Naive thymus-derived CD8-positive, alpha-beta T cell (primary cell): ENCODE measurements at regions of chr12 and their contacts with region 1.

Region 1: GRCh38 chr12:53379389-53380103 is 430 bp upstream of the SP1 start:
- DNase-seq: peak; percentile 68 to 100 (median 99)
- ATAC-seq: peak; percentile 78 to 81
- H3K4me3 Mint-ChIP-seq: no peak overlapping the region
- H3K27ac Mint-ChIP-seq: no peak overlapping the region
- H3K4me1 Mint-ChIP-seq: peaks cover 20 to 41% (median 38%) of the 10 kb centered on the region in 4 donors
- H3K27me3 Mint-ChIP-seq: no peaks in the 10 kb centered on the region

Region 2: DNA sequence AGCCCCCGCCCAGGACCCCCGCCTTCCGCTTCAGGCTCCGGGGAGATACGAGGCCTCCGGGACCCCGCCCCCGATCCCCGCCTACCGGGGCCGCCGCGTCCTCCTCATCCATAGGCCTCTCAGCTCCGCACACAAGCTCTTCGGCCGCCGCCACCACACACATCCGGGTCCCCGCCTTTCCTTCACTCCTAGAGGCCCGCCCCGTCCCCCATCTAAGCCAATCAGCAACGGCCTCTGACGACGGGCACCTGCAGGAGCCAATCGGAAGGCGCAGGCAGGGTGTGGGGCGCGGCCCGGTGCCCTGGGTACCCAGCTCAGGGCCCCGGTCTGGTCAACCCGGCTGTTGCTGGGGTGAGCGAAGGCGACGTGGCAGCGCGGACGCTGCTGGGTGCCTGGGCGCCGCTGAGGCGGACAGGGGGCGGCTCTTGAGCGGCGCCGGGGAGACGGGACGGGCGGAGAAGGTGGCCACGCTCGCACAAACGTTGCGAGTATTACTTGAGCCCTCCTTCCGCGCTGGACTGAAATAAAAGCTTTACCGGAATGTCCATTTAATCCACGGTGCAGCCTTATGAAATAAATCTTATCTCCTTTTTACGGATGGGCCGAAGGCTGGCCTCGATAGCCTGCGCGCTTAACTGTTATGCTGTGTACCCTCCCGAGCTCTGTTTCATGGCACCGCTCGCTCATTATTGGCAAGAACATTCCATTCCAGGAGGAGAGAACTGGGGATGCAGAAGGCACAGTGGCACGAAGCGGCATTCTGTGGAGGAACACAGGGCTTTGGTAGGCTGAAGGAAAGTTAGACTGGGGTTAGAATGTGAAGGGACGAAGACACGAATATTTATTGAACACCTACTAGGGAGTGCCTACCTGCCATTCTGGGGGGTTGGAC is 300.1 kb before region 1 on chr12 and contains the start of gene SPRYD3:
- POLR2A ChIA-PET with region 1: interaction called, 10 read pairs
- DNase-seq: peak; percentile 91 to 99 (median 97)
- ATAC-seq: peak; percentile 95 to 96
- H3K4me3 Mint-ChIP-seq: peak within 1 kb of the TSS; percentile 85 to 99 (median 94)
- H3K27ac Mint-ChIP-seq: peak within 1 kb of the TSS; percentile 91 to 98 (median 97)
- H3K4me1 Mint-ChIP-seq: peaks cover 20 to 59% (median 47%) of the 10 kb centered on the region in 4 donors
- H3K27me3 Mint-ChIP-seq: no peaks in the 10 kb centered on the region
- polyA plus RNA-seq, gene SPRYD3: 49.4 to 53.2 (median 51.7) TPM

Region 3: GRCh38 chr12:53295070-53295890 is 84.3 kb before region 1 on chr12 and contains the start of gene PFDN5:
- POLR2A ChIA-PET with region 1: interaction called, 12 read pairs
- DNase-seq: peak; percentile 72 to 94 (median 87)
- ATAC-seq: peak; percentile 90 to 93
- H3K4me3 Mint-ChIP-seq: peak within 1 kb of the TSS; percentile 95 to 100 (median 99)
- H3K27ac Mint-ChIP-seq: peak within 1 kb of the TSS; percentile 97 to 100 (median 99)
- H3K4me1 Mint-ChIP-seq: peaks cover 10 to 61% (median 46%) of the 10 kb centered on the region in 4 donors
- H3K27me3 Mint-ChIP-seq: no peaks in the 10 kb centered on the region
- polyA plus RNA-seq, gene PFDN5: 1,657 to 1,928 (median 1,896) TPM

Region 4: DNA sequence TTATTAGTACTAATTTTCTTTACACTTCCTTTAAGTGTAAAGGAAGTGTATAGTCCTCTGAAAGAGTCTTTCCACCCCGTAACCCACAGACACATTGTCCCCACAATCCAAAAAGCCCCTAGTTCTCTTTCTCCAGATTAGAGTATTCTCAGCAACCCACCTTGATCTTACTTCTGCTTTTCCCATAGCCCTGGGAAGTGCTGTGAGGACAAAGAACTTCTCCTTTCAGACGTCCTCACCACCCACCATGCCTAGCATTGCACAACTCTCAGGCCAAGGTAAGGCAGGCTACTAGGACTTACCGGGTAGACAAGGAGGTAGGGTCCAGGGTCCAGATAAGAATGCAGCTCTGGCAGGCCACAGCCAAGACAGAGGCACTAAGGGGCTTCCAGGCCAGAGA is 65.5 kb before region 1 on chr12:
- POLR2A ChIA-PET with region 1: no interaction called
- DNase-seq: no peak
- ATAC-seq: no peak
- H3K4me3 Mint-ChIP-seq: no peak overlapping the region
- H3K27ac Mint-ChIP-seq: peak overlapping the region in 2 of 10 donors; percentile 33 to 71
- H3K4me1 Mint-ChIP-seq: peaks cover 4 to 8% (median 6%) of the 10 kb centered on the region in 4 donors
- H3K27me3 Mint-ChIP-seq: no peaks in the 10 kb centered on the region

Region 5: DNA sequence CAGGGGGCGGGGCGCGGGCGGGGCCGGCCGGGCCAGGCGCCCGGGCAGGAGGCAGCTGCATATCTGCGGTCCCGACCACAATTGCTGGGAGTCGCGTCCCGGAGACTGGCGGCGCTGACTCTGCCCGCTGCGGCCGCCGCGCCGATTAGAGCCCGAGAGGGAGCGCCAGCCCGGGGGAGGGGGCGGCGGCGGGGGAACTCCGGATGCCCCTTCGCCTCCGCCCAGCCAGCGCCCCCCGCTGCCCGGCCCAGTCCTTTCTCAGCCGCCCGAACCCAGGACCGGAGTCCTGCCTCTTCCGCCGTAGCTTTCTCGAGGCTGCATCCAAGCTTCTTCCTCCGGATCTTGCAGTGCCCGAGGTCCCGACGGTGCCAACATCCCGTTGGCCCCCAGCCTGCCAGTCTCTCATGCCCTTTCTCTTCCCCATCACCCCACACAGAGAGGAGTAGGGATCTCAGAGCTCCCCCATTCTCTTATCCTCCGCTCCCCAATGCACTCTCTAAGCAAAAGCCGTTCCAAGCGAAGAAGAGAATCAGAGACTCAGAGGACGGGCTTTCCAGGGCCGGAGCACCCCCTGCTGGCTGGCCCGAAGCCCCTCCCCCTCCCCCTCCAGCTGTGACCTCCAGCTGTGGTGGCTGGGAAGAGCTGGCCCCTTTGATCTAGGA is 34.6 kb before region 1 on chr12:
- POLR2A ChIA-PET with region 1: interaction called, 18 read pairs
- DNase-seq: peak; percentile 46 to 85 (median 64)
- ATAC-seq: peak; percentile 67 to 85
- H3K4me3 Mint-ChIP-seq: peak overlapping the region; percentile 92 to 100 (median 98)
- H3K27ac Mint-ChIP-seq: peak overlapping the region; percentile 84 to 97 (median 92)
- H3K4me1 Mint-ChIP-seq: peaks cover 17 to 25% (median 18%) of the 10 kb centered on the region in 4 donors
- H3K27me3 Mint-ChIP-seq: peaks cover 0 to 10% (median 1%) of the 10 kb centered on the region in 5 donors

Region 6: DNA sequence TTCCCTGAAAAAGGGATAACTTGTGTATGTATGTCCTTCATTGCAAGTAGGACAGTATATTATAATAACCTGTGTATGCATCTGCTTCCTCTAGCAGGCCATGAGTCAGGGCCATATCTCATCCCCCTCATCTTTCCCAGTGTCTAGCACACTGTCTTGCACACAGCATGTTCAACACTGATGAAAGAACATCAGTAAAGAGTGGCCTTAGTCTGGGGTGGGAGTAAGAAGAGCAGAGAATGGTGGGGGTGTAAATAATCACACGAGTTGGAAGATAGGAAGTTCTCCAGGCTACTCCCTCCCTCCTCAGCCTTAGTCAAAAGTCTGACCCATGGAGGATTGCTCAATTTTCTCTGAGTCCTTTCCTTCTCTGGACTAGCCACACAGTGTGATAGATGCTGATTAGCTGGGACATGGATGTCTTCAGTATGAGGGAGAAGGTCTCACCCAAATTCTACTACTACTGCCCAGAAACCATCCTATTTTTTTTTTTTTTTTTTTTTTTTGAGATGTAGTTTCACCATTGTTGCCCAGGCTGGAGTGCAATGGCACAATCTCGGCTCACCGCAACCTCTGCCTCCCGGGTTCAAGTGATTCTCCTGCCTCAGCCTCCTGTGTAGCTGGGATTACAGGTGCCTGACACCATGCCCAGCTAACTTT is 14.2 kb before region 1 on chr12:
- POLR2A ChIA-PET with region 1: interaction called, 18 read pairs
- DNase-seq: no peak
- ATAC-seq: no peak
- H3K4me3 Mint-ChIP-seq: peak overlapping the region in 3 of 10 donors; percentile 9 to 48 (median 15)
- H3K27ac Mint-ChIP-seq: peak overlapping the region in 9 of 10 donors; percentile 16 to 88 (median 79)
- H3K4me1 Mint-ChIP-seq: peaks cover 4 to 21% (median 14%) of the 10 kb centered on the region in 4 donors
- H3K27me3 Mint-ChIP-seq: no peaks in the 10 kb centered on the region

Region 7: DNA sequence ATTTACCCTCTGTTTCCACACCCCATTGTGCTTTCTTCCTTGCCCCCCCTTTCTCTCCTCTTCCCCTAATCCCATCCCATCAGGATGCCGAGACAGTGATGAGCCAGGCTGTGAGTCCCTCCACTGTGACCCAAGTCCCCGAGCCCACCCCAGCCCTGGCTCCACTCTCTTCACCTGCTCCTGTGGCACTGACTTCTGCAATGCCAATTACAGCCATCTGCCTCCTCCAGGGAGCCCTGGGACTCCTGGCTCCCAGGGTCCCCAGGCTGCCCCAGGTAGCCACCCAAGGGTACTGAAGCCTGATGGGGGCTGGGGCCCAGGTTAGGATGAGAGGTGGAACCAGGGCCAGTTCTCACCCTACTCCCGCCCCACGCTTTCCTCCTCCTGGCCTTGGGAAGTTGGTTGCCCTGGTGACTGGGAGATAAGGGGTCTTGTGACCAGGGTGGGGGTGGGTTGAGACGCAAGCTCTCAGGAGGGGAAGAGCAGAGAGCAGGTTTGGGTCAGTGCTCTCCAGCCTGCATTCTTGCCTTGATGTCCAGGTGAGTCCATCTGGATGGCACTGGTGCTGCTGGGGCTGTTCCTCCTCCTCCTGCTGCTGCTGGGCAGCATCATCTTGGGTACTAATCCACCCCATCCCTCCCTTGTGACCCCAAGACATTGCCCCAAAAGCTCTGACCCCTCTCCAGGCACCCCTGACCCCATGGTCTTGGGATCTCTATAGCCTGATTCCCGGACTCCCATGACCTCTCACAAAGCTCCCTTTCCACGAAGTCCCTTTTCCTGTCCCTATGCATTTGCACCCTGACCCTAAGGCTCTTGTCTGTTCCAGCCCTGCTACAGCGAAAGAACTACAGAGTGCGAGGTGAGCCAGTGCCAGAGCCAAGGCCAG is 45.3 kb after region 1 on chr12:
- POLR2A ChIA-PET with region 1: interaction called, 10 read pairs
- DNase-seq: no peak
- ATAC-seq: no peak
- H3K4me3 Mint-ChIP-seq: no peak overlapping the region
- H3K27ac Mint-ChIP-seq: peak overlapping the region in 1 of 10 donors; percentile 57
- H3K4me1 Mint-ChIP-seq: peaks cover 4 to 7% (median 5%) of the 10 kb centered on the region in 4 donors
- H3K27me3 Mint-ChIP-seq: no peaks in the 10 kb centered on the region

Region 8: GRCh38 chr12:53500776-53501614 is 121.4 kb after region 1 on chr12 and contains the start of gene TARBP2:
- POLR2A ChIA-PET with region 1: interaction called, 37 read pairs
- DNase-seq: peak; percentile 90 to 99 (median 99)
- ATAC-seq: peak; percentile 78 to 81
- H3K4me3 Mint-ChIP-seq: peak within 1 kb of the TSS; percentile 89 to 96 (median 94)
- H3K27ac Mint-ChIP-seq: peak within 1 kb of the TSS; percentile 90 to 99 (median 97)
- H3K4me1 Mint-ChIP-seq: peaks cover 22 to 55% (median 44%) of the 10 kb centered on the region in 4 donors
- H3K27me3 Mint-ChIP-seq: no peaks in the 10 kb centered on the region
- polyA plus RNA-seq, gene TARBP2: 27.0 to 32.1 (median 27.9) TPM